ENCODE measurements at regions of chr4 and their contacts with region 1.

Region 1: DNA sequence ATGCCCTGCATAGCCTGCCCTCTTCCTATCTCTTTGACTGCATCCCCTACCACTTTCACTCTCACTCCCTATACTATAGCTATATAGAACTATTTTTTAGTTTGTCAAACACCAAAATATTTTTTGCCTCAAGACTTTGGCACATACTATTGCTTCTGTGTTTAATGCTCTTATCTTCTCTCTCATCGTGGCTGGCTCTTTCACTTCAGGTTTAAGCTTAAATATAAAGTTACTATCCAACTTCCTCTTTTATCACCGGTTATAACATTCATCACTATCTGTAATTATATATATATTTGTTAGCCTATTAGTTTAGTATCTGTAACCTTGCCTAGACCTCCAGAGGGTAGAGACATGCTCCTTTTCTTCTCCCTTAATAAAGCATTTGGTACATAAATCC is 11.5 kb upstream of the HMGB2 start:
- DNase-seq: no peak
- H3K4me3 Mint-ChIP-seq: no peak overlapping the region
- H3K27ac Mint-ChIP-seq: no peak overlapping the region
- H3K4me1 Mint-ChIP-seq: peaks cover 2% of the 10 kb centered on the region
- H3K27me3 Mint-ChIP-seq: peaks cover 16% of the 10 kb centered on the region

Region 2: DNA sequence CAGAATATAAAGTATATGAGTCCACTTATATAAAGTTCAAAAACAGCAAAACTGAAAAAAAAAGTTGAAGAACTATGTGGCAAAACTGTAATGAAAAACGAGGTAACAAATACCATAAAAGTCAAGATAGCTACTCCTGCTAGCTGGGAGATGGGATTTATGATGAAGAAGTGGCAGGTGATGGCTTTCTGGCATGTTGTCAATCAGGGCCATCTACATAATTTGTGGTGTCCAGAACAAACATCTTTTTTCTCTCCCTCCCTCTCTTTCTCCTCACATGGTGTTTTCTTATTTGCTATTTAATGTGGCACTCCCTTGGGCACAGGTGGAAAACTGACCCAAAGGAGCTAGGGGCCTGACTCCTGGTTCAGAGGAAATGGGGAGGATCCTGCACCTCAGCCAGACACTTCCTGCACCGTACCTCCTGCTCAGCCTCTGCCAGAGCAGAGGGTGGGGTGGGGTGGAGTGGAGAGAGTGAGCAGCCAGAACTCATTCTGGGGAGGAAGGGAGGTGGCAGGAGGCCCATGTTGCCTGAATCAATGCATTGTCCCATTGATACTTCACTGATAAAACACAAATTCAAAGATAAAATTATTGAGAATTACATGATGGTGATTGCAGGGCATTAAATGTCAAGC is 19.8 kb after region 1 on chr4:
- intact Hi-C with region 1: loop called (anchors 2 kb)
- DNase-seq: peak; percentile 77
- H3K4me3 Mint-ChIP-seq: no peak overlapping the region
- H3K27ac Mint-ChIP-seq: peak overlapping the region; percentile 39
- H3K4me1 Mint-ChIP-seq: peaks cover 38% of the 10 kb centered on the region
- H3K27me3 Mint-ChIP-seq: no peaks in the 10 kb centered on the region